ENCODE measurements at regions of chr6 and their contacts with region 1.

Region 1: DNA sequence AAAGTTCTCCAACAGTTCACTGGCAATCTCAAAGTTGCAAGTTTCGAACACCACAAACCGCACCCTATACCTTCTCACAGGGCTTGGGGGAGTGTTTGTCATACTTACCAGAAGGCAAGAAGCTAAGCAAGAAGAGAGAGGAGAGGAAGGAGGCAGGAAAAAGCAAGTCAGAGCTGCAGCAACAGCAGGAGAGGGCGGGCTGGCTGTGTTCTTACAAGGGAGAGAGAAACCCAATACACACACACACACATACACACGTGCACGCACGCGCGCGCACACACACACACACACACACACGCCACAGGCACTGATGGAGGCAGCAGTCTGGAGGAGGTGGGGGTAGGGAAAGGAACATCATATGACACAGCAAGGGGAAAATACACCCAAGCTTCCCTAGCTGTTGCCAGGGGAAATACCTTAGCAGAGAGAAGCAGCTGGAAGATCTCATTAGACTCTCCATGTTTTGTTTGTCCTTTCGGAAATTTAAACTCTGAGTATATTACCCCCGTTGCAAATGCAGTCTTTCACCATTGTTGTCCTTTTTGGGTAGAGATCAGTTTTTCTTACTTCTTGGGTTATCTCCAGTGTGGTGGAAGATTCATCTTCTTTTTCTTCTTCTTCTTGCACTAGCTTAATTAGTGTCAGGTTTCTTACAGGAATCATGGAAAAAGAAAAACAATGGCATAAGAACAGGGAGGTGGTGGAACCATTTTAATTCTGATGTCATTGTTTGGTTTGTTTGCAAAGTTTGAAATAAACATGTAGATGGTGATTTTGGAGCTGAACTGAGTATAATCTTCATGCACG is at the start of gene TXLNB:
- DNase-seq: peak; percentile 92
- ATAC-seq: peak; percentile 94
- H3K4me3 Mint-ChIP-seq: peak within 1 kb of the TSS; percentile 64
- H3K27ac Mint-ChIP-seq: peak within 1 kb of the TSS; percentile 96
- H3K4me1 Mint-ChIP-seq: peaks cover 66% of the 10 kb centered on the region
- H3K27me3 Mint-ChIP-seq: no peaks in the 10 kb centered on the region
- total RNA-seq, gene TXLNB: 0.26 to 0.27 TPM

Region 2: DNA sequence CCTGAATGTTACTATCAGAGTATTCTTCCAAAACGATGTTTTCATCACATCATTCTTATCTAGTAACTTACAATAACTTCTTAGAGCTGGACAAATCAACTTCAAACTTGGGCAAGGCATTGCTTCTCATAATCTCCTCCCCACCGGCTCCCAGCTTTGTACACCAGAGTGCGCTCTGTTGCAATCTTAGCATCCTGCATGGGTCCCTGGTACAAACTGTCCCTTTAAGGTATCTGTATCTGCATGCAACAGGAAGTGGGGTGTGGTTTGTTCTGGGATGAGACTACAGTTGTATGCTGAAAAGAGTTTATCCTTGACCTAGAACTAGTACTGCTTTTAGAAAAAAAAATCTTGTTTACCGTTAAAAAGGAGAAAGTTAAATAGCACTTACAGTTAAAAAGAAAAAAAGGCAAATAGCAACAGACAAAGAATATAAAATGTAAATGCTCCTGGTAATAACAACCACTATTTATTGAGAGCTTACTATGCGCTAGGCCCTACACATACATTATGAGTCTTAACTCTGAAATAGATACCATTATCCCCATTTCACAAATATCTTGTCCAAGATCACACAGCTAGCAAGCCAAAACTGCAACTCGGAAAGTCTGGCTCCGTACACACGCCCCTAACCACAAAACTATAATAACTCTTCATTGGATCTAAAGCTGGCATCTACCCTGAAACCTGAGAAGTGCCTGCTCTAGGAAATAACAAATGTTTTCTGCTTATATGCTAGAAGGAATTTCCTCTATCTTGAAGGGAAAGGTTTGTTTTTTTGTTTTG is 166.9 kb before region 1 on chr6:
- CTCF ChIA-PET with region 1: interaction called, 3 read pairs
- POLR2A ChIA-PET with region 1: interaction called, 4 read pairs
- intact Hi-C with region 1: loop called in 1 of 2 experiments (anchors 2 kb)
- DNase-seq: peak; percentile 90
- ATAC-seq: peak; percentile 96
- H3K4me3 Mint-ChIP-seq: peak overlapping the region; percentile 58
- H3K27ac Mint-ChIP-seq: peak overlapping the region; percentile 95
- H3K4me1 Mint-ChIP-seq: peaks cover 51% of the 10 kb centered on the region
- H3K27me3 Mint-ChIP-seq: no peaks in the 10 kb centered on the region

Region 3: GRCh38 chr6:139250296-139251044 is 41.5 kb before region 1 on chr6:
- CTCF ChIA-PET with region 1: interaction called, 4 read pairs
- POLR2A ChIA-PET with region 1: interaction called, 5 read pairs
- intact Hi-C with region 1: loop called (anchors 5 kb)
- DNase-seq: peak; percentile 76
- ATAC-seq: peak; percentile 83
- H3K4me3 Mint-ChIP-seq: no peak overlapping the region
- H3K27ac Mint-ChIP-seq: peak overlapping the region; percentile 76
- H3K4me1 Mint-ChIP-seq: peaks cover 52% of the 10 kb centered on the region
- H3K27me3 Mint-ChIP-seq: no peaks in the 10 kb centered on the region

Region 4: DNA sequence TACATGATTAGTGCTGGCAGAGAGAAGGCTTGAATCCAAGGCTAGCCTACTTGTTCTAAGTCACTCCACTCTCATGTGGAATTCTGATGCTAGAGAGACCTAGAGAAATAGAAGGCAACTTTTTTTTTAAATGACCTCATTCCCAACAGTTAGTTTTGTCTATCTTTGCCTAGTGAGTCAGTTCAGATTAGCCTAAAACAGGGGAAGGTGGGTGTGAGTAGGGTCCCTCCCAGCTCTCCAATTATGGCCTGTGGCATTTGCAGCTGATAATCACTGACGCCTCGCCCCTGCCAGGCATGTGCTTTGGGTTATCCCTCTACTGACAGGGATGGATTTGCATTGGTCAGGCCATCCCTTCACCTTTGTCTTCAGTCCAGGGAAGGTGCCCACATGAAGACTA is 13.8 kb before region 1 on chr6:
- CTCF ChIA-PET with region 1: interaction called, 7 read pairs
- POLR2A ChIA-PET with region 1: interaction called, 4 read pairs
- intact Hi-C with region 1: loop called in 1 of 2 experiments (anchors 1 kb)
- DNase-seq: no peak
- ATAC-seq: no peak
- H3K4me3 Mint-ChIP-seq: no peak overlapping the region
- H3K27ac Mint-ChIP-seq: no peak overlapping the region
- H3K4me1 Mint-ChIP-seq: peaks cover 28% of the 10 kb centered on the region
- H3K27me3 Mint-ChIP-seq: no peaks in the 10 kb centered on the region

Region 5: GRCh38 chr6:139308286-139308916 is 16.4 kb after region 1 on chr6:
- CTCF ChIA-PET with region 1: interaction called, 15 read pairs
- POLR2A ChIA-PET with region 1: interaction called, 3 read pairs
- intact Hi-C with region 1: loop called (anchors 2 kb)
- DNase-seq: no peak
- ATAC-seq: peak; percentile 82
- H3K4me3 Mint-ChIP-seq: no peak overlapping the region
- H3K27ac Mint-ChIP-seq: peak overlapping the region; percentile 87
- H3K4me1 Mint-ChIP-seq: peaks cover 29% of the 10 kb centered on the region
- H3K27me3 Mint-ChIP-seq: no peaks in the 10 kb centered on the region

Measured in activated CD4-positive, alpha-beta T cell treated with anti-CD3 and anti-CD28 coated beads for 36 hours (primary cell).